CD4-positive, alpha-beta T cell (primary cell): ENCODE measurements at regions of chr1 and their contacts with region 1.

Region 1: DNA sequence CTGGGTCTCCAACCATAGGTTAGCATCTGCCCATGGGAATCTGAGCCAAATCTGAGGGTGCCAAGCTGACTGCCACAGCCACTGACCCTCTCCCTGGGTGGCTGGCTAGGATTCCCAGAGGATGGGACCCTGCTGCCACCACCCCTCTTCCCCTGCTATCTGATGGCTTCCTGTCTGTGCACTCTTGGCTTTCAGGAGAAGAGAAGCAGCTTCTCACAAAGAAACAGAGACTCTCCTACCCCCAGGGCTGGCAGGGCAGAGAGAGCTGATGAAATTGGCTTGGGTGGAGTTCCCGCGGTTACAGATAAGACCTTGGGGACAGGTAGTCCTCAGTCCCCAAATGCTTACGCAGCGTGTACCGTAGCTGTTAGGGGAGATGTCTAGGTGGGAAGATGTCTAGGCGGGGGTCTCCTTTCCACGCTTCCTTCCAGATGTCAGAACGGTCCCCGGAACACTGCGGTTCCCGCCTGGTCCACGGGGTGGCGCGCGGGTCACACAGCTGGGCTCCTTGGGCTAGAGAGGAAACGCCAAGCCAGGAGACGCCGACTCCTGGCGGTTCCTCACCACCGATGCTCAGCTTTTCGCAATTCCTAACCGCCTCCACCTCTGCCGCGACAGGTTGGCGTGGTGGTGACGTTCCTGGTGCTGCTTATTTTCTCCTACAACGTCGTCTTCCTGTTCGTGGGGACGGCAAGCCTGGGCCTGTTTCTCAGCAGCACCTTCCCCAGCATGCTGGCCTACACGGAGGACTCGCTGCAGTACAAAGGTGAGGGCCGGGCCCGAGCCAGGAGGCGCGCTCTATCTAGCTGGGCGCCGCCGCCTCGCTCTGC is 40.1 kb downstream of the ELK4 start:
- DNase-seq: peak; percentile 81 to 94 (median 88)
- ATAC-seq: peak; percentile 85
- H3K4me3 ChIP-seq: peak overlapping the region; percentile 50
- H3K4me3 Mint-ChIP-seq: peak overlapping the region; percentile 90
- H3K27ac ChIP-seq: peak overlapping the region; percentile 23 to 45
- H3K27ac Mint-ChIP-seq: peak overlapping the region; percentile 99
- H3K4me1 ChIP-seq: peaks cover 31% of the 10 kb centered on the region
- H3K4me1 Mint-ChIP-seq: peaks cover 50% of the 10 kb centered on the region
- H3K27me3 ChIP-seq: no peaks in the 10 kb centered on the region
- H3K27me3 Mint-ChIP-seq: no peaks in the 10 kb centered on the region
- CTCF ChIP-seq: peak; percentile 96

Region 2: DNA sequence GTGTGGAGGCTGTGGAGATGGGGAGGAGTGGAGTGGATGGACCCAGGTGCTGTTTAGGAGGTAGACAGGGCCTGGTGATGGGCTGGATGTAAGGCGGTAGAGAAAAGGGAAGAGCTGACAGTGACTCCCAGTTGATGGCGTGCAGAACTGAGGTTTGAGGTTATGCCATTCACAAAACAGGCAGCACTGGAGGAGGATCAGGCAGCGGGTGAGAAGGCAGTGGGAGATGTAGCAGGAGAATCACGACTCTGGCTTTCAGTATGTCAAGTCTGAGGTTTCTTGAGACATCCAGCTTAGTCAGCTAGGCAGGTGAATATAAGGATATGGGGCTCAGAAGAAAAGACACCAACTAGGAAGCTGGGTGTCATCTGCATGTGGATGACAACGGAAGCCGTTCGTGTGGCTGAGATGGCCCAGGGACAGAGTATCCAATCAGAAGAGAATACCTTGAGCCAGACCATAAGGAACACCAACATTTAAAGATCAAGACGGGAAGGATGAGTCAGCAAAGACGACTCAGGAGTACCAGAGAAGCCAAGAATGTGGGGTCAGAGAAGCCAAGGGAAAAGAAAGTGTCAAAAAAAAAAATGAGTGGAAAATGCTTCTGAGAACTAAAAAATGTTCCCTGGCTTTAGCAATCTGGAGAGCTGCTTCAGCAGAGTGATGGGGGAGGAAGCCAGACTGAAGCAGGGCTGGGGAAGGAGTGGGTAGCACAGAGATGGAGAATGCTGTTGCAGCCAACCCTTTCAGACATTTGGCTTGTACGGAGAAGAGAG is 921.4 kb before region 1 on chr1:
- CTCF ChIA-PET with region 1: no interaction called
- POLR2A ChIA-PET with region 1: no interaction called
- intact Hi-C with region 1: no loop called
- DNase-seq: no peak
- ATAC-seq: no peak
- H3K4me3 ChIP-seq: no peak overlapping the region
- H3K4me3 Mint-ChIP-seq: no peak overlapping the region
- H3K27ac ChIP-seq: no peak overlapping the region
- H3K27ac Mint-ChIP-seq: no peak overlapping the region
- H3K4me1 ChIP-seq: no peaks in the 10 kb centered on the region
- H3K4me1 Mint-ChIP-seq: no peaks in the 10 kb centered on the region
- H3K27me3 ChIP-seq: no peaks in the 10 kb centered on the region
- H3K27me3 Mint-ChIP-seq: no peaks in the 10 kb centered on the region
- CTCF ChIP-seq: no peak

Region 3: GRCh38 chr1:205610036-205610435 is 18.3 kb after region 1 on chr1:
- CTCF ChIA-PET with region 1: interaction called, 11 read pairs
- POLR2A ChIA-PET with region 1: interaction called, 9 read pairs
- intact Hi-C with region 1: loop called in 1 of 2 experiments (anchors 2 kb)
- DNase-seq: no peak
- ATAC-seq: no peak
- H3K4me3 ChIP-seq: no peak overlapping the region
- H3K4me3 Mint-ChIP-seq: no peak overlapping the region
- H3K27ac ChIP-seq: no peak overlapping the region
- H3K27ac Mint-ChIP-seq: peak overlapping the region; percentile 64
- H3K4me1 ChIP-seq: peaks cover 3% of the 10 kb centered on the region
- H3K4me1 Mint-ChIP-seq: peaks cover 61% of the 10 kb centered on the region
- H3K27me3 ChIP-seq: no peaks in the 10 kb centered on the region
- H3K27me3 Mint-ChIP-seq: no peaks in the 10 kb centered on the region
- CTCF ChIP-seq: no peak

Region 4: DNA sequence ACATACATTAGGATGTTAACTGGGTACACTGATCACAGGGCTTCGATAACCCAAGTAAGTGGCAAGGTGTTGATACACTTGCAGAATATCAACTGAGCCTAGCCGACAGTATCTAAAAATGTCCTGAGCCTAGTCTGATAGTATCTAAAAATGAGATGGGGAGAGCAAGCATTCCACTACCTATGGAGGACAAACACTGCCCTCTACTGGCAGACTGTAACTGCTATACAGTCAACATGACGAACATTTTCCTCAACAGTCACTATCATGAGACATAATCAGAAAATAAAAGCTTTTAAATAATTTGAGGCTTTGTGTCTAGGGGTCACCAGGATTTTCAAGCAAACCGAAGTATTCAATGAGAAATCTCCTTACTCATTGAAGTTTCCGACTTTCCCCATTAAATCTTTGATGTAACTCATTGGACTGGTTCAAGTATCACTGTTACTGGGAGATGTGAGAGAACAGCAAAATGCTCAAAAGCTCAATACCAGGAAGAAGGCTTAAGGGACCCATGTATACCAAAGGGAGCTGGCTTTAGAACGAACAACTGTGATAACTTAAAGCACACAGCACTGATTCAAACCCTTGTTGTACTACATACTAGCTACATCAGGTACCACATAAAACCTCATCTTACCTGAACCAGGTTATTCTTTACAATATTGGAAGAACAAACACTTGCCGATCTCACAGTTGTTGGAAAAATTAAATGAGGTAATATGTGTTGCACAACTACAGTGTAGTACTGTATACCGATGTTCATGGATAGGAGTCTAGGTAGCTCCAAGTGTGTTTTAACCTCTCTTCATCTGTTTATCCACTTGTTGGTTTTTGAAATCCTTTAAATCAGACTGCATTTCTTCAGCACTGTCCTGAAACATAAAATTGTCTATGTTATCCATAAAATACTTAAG is 119.6 kb after region 1 on chr1:
- CTCF ChIA-PET with region 1: interaction called, 19 read pairs
- POLR2A ChIA-PET with region 1: interaction called, 3 read pairs
- intact Hi-C with region 1: loop called (anchors 2 kb)
- DNase-seq: peak in 12 of 14 experiments; percentile 16 to 87 (median 47)
- ATAC-seq: peak; percentile 95
- H3K4me3 ChIP-seq: no peak overlapping the region
- H3K4me3 Mint-ChIP-seq: no peak overlapping the region
- H3K27ac ChIP-seq: no peak overlapping the region
- H3K27ac Mint-ChIP-seq: peak overlapping the region; percentile 47
- H3K4me1 ChIP-seq: no peaks in the 10 kb centered on the region
- H3K4me1 Mint-ChIP-seq: peaks cover 40% of the 10 kb centered on the region
- H3K27me3 ChIP-seq: no peaks in the 10 kb centered on the region
- H3K27me3 Mint-ChIP-seq: no peaks in the 10 kb centered on the region
- CTCF ChIP-seq: peak; percentile 91

Region 5: GRCh38 chr1:205775015-205775716 is 183.4 kb after region 1 on chr1 and contains the start of gene RAB29:
- CTCF ChIA-PET with region 1: interaction called, 8 read pairs
- POLR2A ChIA-PET with region 1: interaction called, 10 read pairs
- intact Hi-C with region 1: loop called (anchors 5 kb)
- DNase-seq: peak; percentile 70 to 95 (median 80)
- ATAC-seq: peak; percentile 89
- H3K4me3 ChIP-seq: peak within 1 kb of the TSS; percentile 78
- H3K4me3 Mint-ChIP-seq: peak within 1 kb of the TSS; percentile 96
- H3K27ac ChIP-seq: peak within 1 kb of the TSS; percentile 87 to 90
- H3K27ac Mint-ChIP-seq: peak within 1 kb of the TSS; percentile 97
- H3K4me1 ChIP-seq: peaks cover 37% of the 10 kb centered on the region
- H3K4me1 Mint-ChIP-seq: peaks cover 61% of the 10 kb centered on the region
- H3K27me3 ChIP-seq: no peaks in the 10 kb centered on the region
- H3K27me3 Mint-ChIP-seq: no peaks in the 10 kb centered on the region
- CTCF ChIP-seq: no peak
- total RNA-seq, gene RAB29: 11.7 to 11.8 TPM

Region 6: DNA sequence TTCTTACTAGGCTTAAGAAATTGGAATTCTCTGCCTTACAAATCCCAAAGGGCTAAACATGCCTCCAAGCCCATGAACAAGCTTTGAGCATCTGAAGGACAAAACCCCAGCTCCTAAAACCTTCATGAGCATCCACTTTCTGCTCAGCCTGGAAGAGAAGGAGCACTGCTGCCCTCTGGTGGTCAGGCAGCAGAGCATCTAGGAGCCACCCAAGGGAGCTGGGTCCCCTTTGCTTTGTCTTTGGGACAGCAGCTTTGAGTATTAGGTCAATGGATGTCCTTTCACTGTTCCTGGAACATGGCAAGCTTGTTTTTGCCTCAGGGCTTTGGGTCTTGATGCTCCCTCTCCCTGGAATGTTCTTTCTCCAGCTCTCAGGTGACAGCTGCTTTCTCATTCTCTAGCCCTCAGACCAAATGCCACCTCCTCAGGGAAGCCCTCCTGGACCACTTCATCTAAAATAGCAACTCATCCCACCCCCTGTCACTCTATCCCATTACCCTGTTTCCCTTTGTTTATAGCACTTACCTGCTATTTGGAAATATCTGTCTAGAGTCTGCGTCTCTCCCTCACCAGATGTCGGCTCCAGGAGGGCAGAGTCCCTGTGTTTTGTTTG is 385.8 kb after region 1 on chr1:
- CTCF ChIA-PET with region 1: interaction called, 15 read pairs
- POLR2A ChIA-PET with region 1: interaction called, 3 read pairs
- intact Hi-C with region 1: loop called in 1 of 2 experiments (anchors 10 kb)
- DNase-seq: peak; percentile 62 to 88 (median 72)
- ATAC-seq: peak; percentile 80
- H3K4me3 ChIP-seq: no peak overlapping the region
- H3K4me3 Mint-ChIP-seq: no peak overlapping the region
- H3K27ac ChIP-seq: no peak overlapping the region
- H3K27ac Mint-ChIP-seq: no peak overlapping the region
- H3K4me1 ChIP-seq: no peaks in the 10 kb centered on the region
- H3K4me1 Mint-ChIP-seq: no peaks in the 10 kb centered on the region
- H3K27me3 ChIP-seq: no peaks in the 10 kb centered on the region
- H3K27me3 Mint-ChIP-seq: peaks cover 4% of the 10 kb centered on the region
- CTCF ChIP-seq: peak; percentile 89

Region 7: GRCh38 chr1:206125346-206125745 is 533.6 kb after region 1 on chr1:
- CTCF ChIA-PET with region 1: no interaction called
- POLR2A ChIA-PET with region 1: no interaction called
- intact Hi-C with region 1: no loop called
- DNase-seq: no peak
- ATAC-seq: no peak
- H3K4me3 ChIP-seq: no peak overlapping the region
- H3K4me3 Mint-ChIP-seq: no peak overlapping the region
- H3K27ac ChIP-seq: no peak overlapping the region
- H3K27ac Mint-ChIP-seq: no peak overlapping the region
- H3K4me1 ChIP-seq: no peaks in the 10 kb centered on the region
- H3K4me1 Mint-ChIP-seq: no peaks in the 10 kb centered on the region
- H3K27me3 ChIP-seq: peaks cover 3 to 27% of the 10 kb centered on the region in 2 experiments
- H3K27me3 Mint-ChIP-seq: peaks cover 58% of the 10 kb centered on the region
- CTCF ChIP-seq: no peak